ENCODE measurements at regions of chr1 and their contacts with region 1.

Region 1: GRCh38 chr1:26529655-26530409 is at the start of gene RPS6KA1:
- DNase-seq: peak; percentile 37 to 77 (median 63)
- ATAC-seq: peak; percentile 90 to 91
- H3K4me3 Mint-ChIP-seq: peak within 1 kb of the TSS; percentile 86 to 94 (median 93)
- H3K27ac Mint-ChIP-seq: peak within 1 kb of the TSS; percentile 64 to 96 (median 86)
- H3K4me1 Mint-ChIP-seq: peaks cover 17 to 36% (median 32%) of the 10 kb centered on the region in 4 donors
- H3K27me3 Mint-ChIP-seq: peaks cover 0 to under 1% (median 0%) of the 10 kb centered on the region in 5 donors
- polyA plus RNA-seq, gene RPS6KA1: 125 to 137 (median 125) TPM

Region 2: DNA sequence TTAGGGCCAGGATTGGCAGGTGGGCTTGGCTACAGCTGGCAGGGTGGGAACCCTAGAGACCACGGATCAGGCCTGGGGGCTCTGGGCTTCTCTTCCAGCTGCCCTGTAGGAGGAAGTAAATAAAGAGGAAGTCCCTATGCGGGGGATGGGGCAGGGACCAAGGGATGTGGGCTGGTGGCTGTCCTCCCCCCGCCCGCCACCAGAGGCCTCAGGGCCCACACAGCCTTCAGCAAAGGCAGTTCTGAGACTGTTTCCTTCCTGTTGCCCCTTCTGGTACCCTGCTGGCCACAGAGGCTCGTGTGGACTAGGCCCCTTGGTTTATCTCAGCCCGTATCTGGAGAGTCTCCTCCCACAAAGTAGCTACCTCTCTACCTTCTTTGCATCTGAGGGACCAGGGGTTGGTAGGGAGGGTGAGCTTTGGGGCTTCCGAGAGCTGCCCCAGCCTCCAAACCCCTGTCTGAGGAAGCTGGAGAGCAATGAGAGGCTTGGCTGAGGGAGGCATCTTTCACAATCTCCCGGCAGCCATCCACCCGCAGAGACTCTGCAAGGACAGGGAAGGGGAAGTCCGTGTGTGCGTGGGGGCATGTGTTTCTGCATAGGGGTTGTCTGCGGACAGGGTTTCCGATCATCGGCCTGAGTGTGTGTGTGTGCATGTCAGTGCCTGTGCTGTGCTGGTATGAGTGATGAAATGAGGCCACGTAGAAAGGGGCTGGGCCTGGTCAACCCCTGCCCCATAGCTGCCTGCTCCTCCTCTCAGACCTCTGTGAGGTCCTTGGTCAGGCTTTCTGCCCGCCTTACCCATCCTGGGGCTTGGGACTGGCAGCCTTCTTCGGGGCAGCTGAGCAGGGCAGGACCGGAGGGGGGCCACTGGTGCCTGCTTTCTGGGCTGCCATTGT is 12.2 kb after region 1 on chr1:
- POLR2A ChIA-PET with region 1: interaction called, 43 read pairs
- DNase-seq: peak; percentile 30 to 85 (median 69)
- ATAC-seq: peak; percentile 71
- H3K4me3 Mint-ChIP-seq: peak overlapping the region; percentile 74 to 91 (median 83)
- H3K27ac Mint-ChIP-seq: peak overlapping the region; percentile 91 to 99 (median 96)
- H3K4me1 Mint-ChIP-seq: peaks cover 51 to 96% (median 89%) of the 10 kb centered on the region in 4 donors
- H3K27me3 Mint-ChIP-seq: no peaks in the 10 kb centered on the region

Region 3: DNA sequence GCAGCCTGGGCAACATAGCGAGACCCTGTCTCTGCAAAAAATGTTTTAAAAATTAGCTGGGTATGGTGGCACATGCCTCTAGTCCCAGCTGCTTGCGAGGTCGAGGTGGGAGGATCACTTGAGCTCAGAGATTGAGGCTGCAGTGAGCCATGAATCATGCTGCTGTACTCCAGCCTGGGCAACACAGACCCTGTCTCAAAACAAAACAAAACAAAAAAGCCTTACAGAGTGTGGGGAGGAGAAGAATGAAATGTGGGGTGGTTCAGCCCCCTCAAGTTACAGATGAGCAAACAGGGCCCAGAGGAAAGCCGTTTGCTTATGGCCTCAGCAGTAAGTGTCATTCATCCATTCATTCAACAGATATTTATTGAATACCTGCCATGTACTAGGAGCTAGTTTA is 40.5 kb after region 1 on chr1:
- POLR2A ChIA-PET with region 1: no interaction called
- DNase-seq: no peak
- ATAC-seq: no peak
- H3K4me3 Mint-ChIP-seq: peak overlapping the region in 1 of 10 donors; percentile 5
- H3K27ac Mint-ChIP-seq: peak overlapping the region in 7 of 10 donors; percentile 36 to 88 (median 75)
- H3K4me1 Mint-ChIP-seq: peaks cover 6 to 16% (median 14%) of the 10 kb centered on the region in 4 donors
- H3K27me3 Mint-ChIP-seq: no peaks in the 10 kb centered on the region

Measured in naive thymus-derived CD8-positive, alpha-beta T cell (primary cell).